CD8-positive, alpha-beta T cell (primary cell): ENCODE measurements at regions of chr11 and their contacts with region 1.

Region 1: DNA sequence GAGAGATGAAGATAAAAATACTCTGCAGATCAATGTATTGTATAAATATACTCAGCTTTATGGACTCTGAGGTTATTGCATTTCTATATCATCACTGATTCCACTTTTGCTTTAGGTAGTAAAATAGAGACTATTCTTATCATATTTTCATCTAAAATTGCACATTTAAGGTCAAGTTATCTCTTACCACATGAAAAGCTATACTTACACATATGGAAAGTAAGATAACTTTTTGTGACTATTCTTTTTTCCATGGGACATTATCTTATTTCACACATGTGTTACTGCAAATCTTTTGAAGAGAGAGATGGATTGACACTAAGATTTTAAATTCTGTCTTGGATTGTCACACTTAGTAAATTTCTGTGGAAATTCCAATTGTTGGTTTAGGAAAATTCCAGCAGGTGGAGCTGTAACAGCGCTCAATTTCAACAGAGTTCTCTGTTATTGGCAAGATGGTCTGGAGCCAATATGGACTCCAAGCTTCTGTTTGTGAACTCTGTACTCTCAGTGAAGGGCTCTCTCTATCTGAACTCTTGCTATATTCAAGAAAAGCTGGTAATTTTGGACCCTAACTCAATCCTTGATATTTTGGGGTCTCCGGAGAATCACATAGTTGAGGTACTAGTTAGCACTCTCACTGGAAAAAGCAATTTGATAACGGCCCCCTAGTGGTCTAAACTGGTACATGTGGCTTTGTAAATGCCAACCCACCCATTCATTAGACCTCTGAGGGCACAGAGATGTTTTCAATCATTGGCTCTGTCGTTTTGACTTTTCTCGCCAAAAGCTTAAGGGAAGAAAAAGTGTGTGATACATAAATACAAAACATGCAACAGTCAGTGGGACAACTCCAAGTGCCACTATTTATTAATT is 429.7 kb downstream of the ETS1 start:
- DNase-seq: peak; percentile 16 to 85 (median 61)
- ATAC-seq: peak; percentile 90
- H3K4me3 ChIP-seq: peak overlapping the region; percentile 35 to 38
- H3K4me3 Mint-ChIP-seq: peak overlapping the region; percentile 81
- H3K27ac ChIP-seq: no peak overlapping the region
- H3K27ac Mint-ChIP-seq: peak overlapping the region; percentile 77
- H3K4me1 ChIP-seq: no peaks in the 10 kb centered on the region
- H3K4me1 Mint-ChIP-seq: peaks cover 7% of the 10 kb centered on the region
- H3K27me3 ChIP-seq: no peaks in the 10 kb centered on the region
- H3K27me3 Mint-ChIP-seq: no peaks in the 10 kb centered on the region
- CTCF ChIP-seq: peak; percentile 98

Region 2: DNA sequence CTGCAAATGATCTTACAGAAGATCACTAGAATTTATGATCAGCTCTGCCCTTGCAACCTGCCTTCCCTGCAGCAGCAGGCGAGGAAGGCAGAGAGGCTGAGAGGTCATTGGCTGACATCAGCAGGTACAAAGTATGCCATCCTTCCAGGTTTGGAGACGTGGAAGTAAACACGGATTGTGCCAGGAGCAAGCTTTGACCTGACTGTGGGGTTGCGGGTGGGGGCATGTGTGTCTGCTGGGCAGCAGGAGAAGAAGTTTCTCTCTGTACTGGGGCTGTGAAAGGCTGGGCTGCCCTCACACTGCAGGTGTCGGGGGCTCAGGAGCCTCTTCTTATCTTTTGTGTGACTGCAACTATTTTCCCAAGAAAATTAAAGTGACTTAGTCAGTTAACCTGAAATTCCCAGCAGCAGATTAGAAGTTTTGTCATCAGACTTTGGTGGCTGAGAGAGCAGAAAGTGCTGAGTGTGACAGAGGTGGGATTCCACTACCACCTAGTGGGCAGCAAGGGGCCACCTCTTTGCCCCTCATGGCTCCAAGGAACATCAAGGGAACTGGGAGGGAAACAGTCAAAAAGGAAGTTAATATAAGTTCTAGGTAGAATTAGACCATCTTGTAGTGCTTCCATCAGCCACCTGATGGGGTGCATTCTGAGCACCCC is 136.2 kb before region 1 on chr11:
- CTCF ChIA-PET with region 1: interaction called, 78 read pairs
- POLR2A ChIA-PET with region 1: no interaction called
- intact Hi-C with region 1: no loop called
- DNase-seq: no peak
- ATAC-seq: no peak
- H3K4me3 ChIP-seq: no peak overlapping the region
- H3K4me3 Mint-ChIP-seq: no peak overlapping the region
- H3K27ac ChIP-seq: no peak overlapping the region
- H3K27ac Mint-ChIP-seq: no peak overlapping the region
- H3K4me1 ChIP-seq: no peaks in the 10 kb centered on the region
- H3K4me1 Mint-ChIP-seq: no peaks in the 10 kb centered on the region
- H3K27me3 ChIP-seq: no peaks in the 10 kb centered on the region
- H3K27me3 Mint-ChIP-seq: peaks cover 3% of the 10 kb centered on the region
- CTCF ChIP-seq: no peak

Region 3: GRCh38 chr11:128045094-128045725 is 112.5 kb before region 1 on chr11:
- CTCF ChIA-PET with region 1: interaction called, 104 read pairs
- POLR2A ChIA-PET with region 1: no interaction called
- intact Hi-C with region 1: no loop called
- DNase-seq: peak in 1 of 9 experiments; percentile 54
- ATAC-seq: no peak
- H3K4me3 ChIP-seq: no peak overlapping the region
- H3K4me3 Mint-ChIP-seq: no peak overlapping the region
- H3K27ac ChIP-seq: no peak overlapping the region
- H3K27ac Mint-ChIP-seq: no peak overlapping the region
- H3K4me1 ChIP-seq: peaks cover 49% of the 10 kb centered on the region
- H3K4me1 Mint-ChIP-seq: peaks cover 69% of the 10 kb centered on the region
- H3K27me3 ChIP-seq: no peaks in the 10 kb centered on the region
- H3K27me3 Mint-ChIP-seq: no peaks in the 10 kb centered on the region
- CTCF ChIP-seq: no peak

Region 4: GRCh38 chr11:128135451-128135850 is 22.2 kb before region 1 on chr11:
- CTCF ChIA-PET with region 1: interaction called, 26 read pairs
- POLR2A ChIA-PET with region 1: no interaction called
- intact Hi-C with region 1: no loop called
- DNase-seq: no peak
- ATAC-seq: no peak
- H3K4me3 ChIP-seq: no peak overlapping the region
- H3K4me3 Mint-ChIP-seq: no peak overlapping the region
- H3K27ac ChIP-seq: no peak overlapping the region
- H3K27ac Mint-ChIP-seq: no peak overlapping the region
- H3K4me1 ChIP-seq: no peaks in the 10 kb centered on the region
- H3K4me1 Mint-ChIP-seq: peaks cover 15% of the 10 kb centered on the region
- H3K27me3 ChIP-seq: no peaks in the 10 kb centered on the region
- H3K27me3 Mint-ChIP-seq: no peaks in the 10 kb centered on the region
- CTCF ChIP-seq: no peak

Region 5: GRCh38 chr11:128188346-128189004 is 30.8 kb after region 1 on chr11:
- CTCF ChIA-PET with region 1: interaction called, 11 read pairs
- POLR2A ChIA-PET with region 1: no interaction called
- intact Hi-C with region 1: no loop called
- DNase-seq: no peak
- ATAC-seq: no peak
- H3K4me3 ChIP-seq: no peak overlapping the region
- H3K4me3 Mint-ChIP-seq: no peak overlapping the region
- H3K27ac ChIP-seq: peak overlapping the region in 1 of 2 experiments; percentile 4
- H3K27ac Mint-ChIP-seq: no peak overlapping the region
- H3K4me1 ChIP-seq: peaks cover 21% of the 10 kb centered on the region
- H3K4me1 Mint-ChIP-seq: peaks cover 19% of the 10 kb centered on the region
- H3K27me3 ChIP-seq: no peaks in the 10 kb centered on the region
- H3K27me3 Mint-ChIP-seq: no peaks in the 10 kb centered on the region
- CTCF ChIP-seq: no peak

Region 6: GRCh38 chr11:128226106-128226716 is 68.5 kb after region 1 on chr11:
- CTCF ChIA-PET with region 1: no interaction called
- POLR2A ChIA-PET with region 1: no interaction called
- intact Hi-C with region 1: no loop called
- DNase-seq: no peak
- ATAC-seq: no peak
- H3K4me3 ChIP-seq: no peak overlapping the region
- H3K4me3 Mint-ChIP-seq: no peak overlapping the region
- H3K27ac ChIP-seq: no peak overlapping the region
- H3K27ac Mint-ChIP-seq: no peak overlapping the region
- H3K4me1 ChIP-seq: no peaks in the 10 kb centered on the region
- H3K4me1 Mint-ChIP-seq: peaks cover 5% of the 10 kb centered on the region
- H3K27me3 ChIP-seq: no peaks in the 10 kb centered on the region
- H3K27me3 Mint-ChIP-seq: no peaks in the 10 kb centered on the region
- CTCF ChIP-seq: no peak

Region 7: DNA sequence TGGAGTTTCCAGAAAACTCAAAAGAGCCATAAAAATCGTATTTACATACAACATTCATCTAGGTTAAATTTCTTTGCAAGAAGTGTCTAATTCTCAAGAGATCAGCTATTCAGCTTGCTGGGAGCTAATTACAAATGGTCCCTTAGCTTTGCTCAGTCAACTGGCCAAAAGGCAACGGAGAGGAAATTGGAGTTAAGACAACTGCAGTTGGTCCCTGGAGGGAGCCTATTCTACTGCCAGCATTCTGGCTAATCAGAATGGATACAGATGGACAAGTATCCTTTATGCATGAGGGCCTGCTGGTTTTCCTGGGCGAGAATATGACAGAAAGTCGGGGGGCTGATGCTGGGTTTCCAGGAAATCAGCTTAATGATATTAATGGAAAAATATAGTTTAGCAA is 663.9 kb after region 1 on chr11:
- CTCF ChIA-PET with region 1: interaction called, 35 read pairs
- POLR2A ChIA-PET with region 1: no interaction called
- intact Hi-C with region 1: no loop called
- DNase-seq: no peak
- ATAC-seq: no peak
- H3K4me3 ChIP-seq: no peak overlapping the region
- H3K4me3 Mint-ChIP-seq: no peak overlapping the region
- H3K27ac ChIP-seq: no peak overlapping the region
- H3K27ac Mint-ChIP-seq: no peak overlapping the region
- H3K4me1 ChIP-seq: no peaks in the 10 kb centered on the region
- H3K4me1 Mint-ChIP-seq: no peaks in the 10 kb centered on the region
- H3K27me3 ChIP-seq: no peaks in the 10 kb centered on the region
- H3K27me3 Mint-ChIP-seq: no peaks in the 10 kb centered on the region
- CTCF ChIP-seq: no peak

Region 8: GRCh38 chr11:128859563-128860441 is 702.1 kb after region 1 on chr11:
- CTCF ChIA-PET with region 1: interaction called, 28 read pairs
- POLR2A ChIA-PET with region 1: no interaction called
- intact Hi-C with region 1: loop called in 1 of 2 experiments (anchors 1 kb)
- DNase-seq: peak; percentile 64 to 83 (median 75)
- ATAC-seq: peak; percentile 97
- H3K4me3 ChIP-seq: no peak overlapping the region
- H3K4me3 Mint-ChIP-seq: no peak overlapping the region
- H3K27ac ChIP-seq: no peak overlapping the region
- H3K27ac Mint-ChIP-seq: no peak overlapping the region
- H3K4me1 ChIP-seq: no peaks in the 10 kb centered on the region
- H3K4me1 Mint-ChIP-seq: peaks cover 4% of the 10 kb centered on the region
- H3K27me3 ChIP-seq: no peaks in the 10 kb centered on the region
- H3K27me3 Mint-ChIP-seq: peaks cover 2% of the 10 kb centered on the region
- CTCF ChIP-seq: peak; percentile 99

Region 9: GRCh38 chr11:129013737-129014475 is 856.2 kb after region 1 on chr11:
- CTCF ChIA-PET with region 1: no interaction called
- POLR2A ChIA-PET with region 1: no interaction called
- intact Hi-C with region 1: no loop called
- DNase-seq: no peak
- ATAC-seq: no peak
- H3K4me3 ChIP-seq: no peak overlapping the region
- H3K4me3 Mint-ChIP-seq: no peak overlapping the region
- H3K27ac ChIP-seq: no peak overlapping the region
- H3K27ac Mint-ChIP-seq: no peak overlapping the region
- H3K4me1 ChIP-seq: no peaks in the 10 kb centered on the region
- H3K4me1 Mint-ChIP-seq: no peaks in the 10 kb centered on the region
- H3K27me3 ChIP-seq: peaks cover 0 to 2% of the 10 kb centered on the region in 2 experiments
- H3K27me3 Mint-ChIP-seq: peaks cover 2% of the 10 kb centered on the region
- CTCF ChIP-seq: no peak